Activated naive CD4-positive, alpha-beta T cell treated with anti-CD3 and anti-CD28 coated beads for 36 hours (primary cell): ENCODE measurements at regions of chr5 and their contacts with region 1.

Region 1: GRCh38 chr5:108748401-108749127 is 867 bp downstream of the FER start:
- DNase-seq: peak; percentile 98
- H3K4me3 Mint-ChIP-seq: peak overlapping the region; percentile 85
- H3K27ac Mint-ChIP-seq: peak overlapping the region; percentile 88
- H3K4me1 Mint-ChIP-seq: peaks cover 17% of the 10 kb centered on the region
- H3K27me3 Mint-ChIP-seq: no peaks in the 10 kb centered on the region

Region 2: DNA sequence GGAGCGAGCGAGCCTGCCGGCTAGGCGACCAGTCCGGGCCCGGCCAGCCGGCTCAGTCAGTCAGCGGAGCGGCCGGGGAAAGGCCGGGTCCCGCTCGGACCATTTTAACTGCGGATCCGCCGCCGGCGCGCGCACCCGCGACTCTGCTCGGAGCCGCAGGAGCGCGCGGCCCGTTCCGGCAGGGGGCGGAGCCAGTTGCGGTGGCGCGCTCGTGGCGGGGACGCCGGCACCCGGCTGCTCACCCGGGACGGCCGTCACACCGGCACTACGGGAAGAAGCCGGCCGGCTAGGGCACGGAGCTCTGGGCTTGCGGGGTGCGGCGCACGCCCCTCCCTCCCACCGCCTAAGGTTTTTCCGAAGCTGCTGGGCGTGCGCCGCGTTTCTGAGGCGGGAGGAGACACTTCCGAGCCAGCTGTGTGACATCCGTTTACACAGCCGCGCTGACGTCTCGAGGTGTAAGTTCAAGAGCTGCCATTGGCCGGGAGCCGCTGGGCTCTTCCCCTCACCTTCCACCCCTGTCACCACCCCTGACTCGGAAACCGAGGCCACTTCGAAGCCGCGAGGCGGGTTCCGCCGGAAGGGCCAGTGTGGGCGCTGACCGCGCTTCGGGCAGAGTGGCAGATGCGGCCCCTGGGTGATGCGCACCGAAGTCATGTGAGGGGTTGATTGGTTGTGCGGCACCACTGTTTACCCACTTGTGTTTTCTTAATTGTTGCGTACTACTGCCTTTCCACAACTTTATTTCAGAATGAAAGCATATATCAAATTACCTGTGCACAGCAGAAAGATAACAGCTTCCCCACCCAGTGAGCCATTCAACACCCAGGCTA is 366.4 kb before region 1 on chr5 and contains the start of gene FBXL17:
- CTCF ChIA-PET with region 1: no interaction called
- intact Hi-C with region 1: loop called (anchors 1 kb)
- DNase-seq: peak; percentile 95
- H3K4me3 Mint-ChIP-seq: peak within 1 kb of the TSS; percentile 82
- H3K27ac Mint-ChIP-seq: peak within 1 kb of the TSS; percentile 95
- H3K4me1 Mint-ChIP-seq: peaks cover 36% of the 10 kb centered on the region
- H3K27me3 Mint-ChIP-seq: no peaks in the 10 kb centered on the region
- total RNA-seq, gene FBXL17: 3.5 to 4.3 TPM

Region 3: DNA sequence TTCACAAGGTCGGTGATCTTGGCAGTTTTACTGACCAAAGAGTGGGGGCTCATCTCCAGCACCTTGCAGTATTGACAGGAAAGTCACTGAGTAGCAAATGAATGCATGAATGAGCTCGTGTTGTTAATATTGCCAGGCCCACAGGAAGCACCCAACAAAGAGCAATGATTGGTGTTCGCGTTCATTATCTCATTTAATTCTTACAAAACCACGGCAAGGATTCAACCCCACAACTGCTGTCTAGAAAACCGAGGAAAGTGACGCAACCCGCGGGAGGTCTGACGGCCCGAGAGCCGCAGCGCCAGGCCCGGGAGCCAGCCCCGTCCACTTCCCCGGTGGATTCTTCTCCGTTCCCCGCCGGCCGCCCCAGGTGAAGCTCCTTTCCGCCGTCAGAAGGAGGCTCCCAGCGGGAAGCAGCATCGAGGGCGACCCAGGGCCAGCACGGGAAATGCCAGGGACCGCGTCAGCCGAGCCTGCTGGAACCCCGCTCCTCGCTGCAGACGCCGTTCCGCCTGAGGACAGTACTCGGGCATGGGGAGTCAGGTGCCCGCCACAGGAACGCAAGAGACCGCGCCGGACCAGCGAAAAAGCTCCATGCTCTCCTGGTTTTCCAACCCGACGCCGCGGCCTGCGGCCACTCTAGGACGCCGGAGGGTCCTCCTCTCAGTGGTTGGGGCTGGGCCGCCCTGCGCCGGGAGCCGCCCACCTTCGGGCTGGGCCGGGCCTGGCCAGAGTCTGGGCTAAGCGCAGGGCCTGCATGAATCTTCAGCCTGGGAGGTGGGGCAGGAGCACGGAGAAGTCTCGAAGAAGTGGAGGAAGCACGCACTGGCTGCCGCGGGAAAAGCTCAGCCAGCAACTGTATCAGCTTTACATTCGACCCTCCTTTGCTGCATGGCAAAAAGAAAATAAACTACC is 20.7 kb before region 1 on chr5:
- CTCF ChIA-PET with region 1: interaction called, 4 read pairs
- intact Hi-C with region 1: loop called (anchors 1 kb)
- DNase-seq: peak; percentile 53
- H3K4me3 Mint-ChIP-seq: peak overlapping the region; percentile 61
- H3K27ac Mint-ChIP-seq: peak overlapping the region; percentile 6
- H3K4me1 Mint-ChIP-seq: peaks cover 21% of the 10 kb centered on the region
- H3K27me3 Mint-ChIP-seq: peaks cover 42% of the 10 kb centered on the region

Region 4: DNA sequence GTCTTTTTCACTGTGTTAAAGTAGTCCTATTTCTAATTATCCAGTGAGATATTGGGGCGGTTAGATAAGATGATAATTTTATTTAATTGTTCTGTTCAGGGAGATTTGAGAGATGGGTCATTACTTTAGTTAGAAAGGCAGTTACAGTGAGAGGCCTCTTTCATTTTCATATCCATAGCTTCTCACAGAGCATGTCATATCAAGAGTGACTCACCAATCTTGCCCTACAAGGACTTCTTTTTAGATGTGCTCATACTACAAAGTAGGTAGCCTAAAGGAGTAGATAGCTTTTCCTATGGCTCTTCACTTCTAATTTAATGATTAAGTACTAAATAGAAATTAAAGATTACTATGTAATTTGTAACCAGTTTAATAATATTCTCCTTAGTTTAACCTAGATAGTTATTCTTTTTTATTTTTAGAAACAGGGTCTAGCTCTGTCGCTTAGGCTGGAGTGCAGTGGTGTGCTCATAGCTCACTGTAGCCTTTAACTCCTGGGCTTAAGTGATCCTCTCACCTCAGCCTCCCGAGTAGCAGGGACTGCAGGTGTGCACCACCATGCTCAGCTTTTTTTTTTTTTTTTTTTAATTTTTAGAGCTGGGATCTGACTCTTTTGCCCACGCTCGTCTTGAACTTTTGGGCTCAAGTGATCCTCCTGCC is 70.2 kb after region 1 on chr5:
- CTCF ChIA-PET with region 1: no interaction called
- intact Hi-C with region 1: loop called (anchors 2 kb)
- DNase-seq: no peak
- H3K4me3 Mint-ChIP-seq: no peak overlapping the region
- H3K27ac Mint-ChIP-seq: no peak overlapping the region
- H3K4me1 Mint-ChIP-seq: peaks cover 3% of the 10 kb centered on the region
- H3K27me3 Mint-ChIP-seq: no peaks in the 10 kb centered on the region

Region 5: DNA sequence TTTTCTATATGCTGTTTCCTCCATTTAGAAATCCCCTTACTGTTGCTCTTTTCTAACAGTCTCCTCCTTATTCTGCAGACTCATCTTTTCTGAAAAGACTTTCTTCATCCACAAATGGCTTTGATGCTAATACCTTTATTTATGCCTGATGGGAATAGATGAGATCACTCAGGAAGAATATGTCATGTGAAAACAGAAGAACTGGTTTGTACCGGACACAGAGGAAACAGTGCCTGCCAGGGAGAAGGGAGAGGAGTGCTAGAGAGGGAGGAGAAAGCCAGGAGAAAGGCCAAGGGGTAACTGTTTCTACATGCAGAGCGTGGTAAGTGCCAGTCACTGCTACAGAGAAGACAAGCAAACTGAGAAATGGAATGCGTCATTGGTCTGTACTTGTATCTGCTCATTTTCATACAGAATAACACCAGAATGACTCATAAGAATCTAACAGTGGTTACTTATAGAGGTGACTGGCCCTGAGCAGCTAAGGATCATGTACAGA is 707.1 kb after region 1 on chr5:
- CTCF ChIA-PET with region 1: no interaction called
- intact Hi-C with region 1: loop called (anchors 2 kb)
- DNase-seq: peak; percentile 54
- H3K4me3 Mint-ChIP-seq: peak overlapping the region; percentile 23
- H3K27ac Mint-ChIP-seq: peak overlapping the region; percentile 88
- H3K4me1 Mint-ChIP-seq: peaks cover 10% of the 10 kb centered on the region
- H3K27me3 Mint-ChIP-seq: peaks cover 10% of the 10 kb centered on the region

Region 6: DNA sequence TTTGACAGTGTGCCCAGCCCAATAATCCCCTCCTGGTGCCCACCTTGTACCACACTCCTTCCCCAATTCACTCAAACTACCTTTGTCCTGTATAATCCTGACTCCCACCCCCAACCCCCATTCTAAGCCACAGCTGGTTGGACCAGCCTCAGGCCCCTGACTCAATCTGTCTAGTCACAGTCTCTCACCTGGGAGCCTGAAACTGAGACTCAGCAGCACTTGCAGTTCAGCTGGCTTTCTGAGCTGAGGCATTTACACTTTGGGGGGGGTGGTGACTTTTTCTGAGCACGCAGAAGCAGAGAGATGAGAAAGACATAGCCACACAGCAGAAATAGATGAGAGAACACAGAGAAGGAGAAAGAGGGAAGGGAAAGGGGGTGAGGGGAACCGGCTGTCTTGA is 1188.4 kb after region 1 on chr5:
- CTCF ChIA-PET with region 1: no interaction called
- intact Hi-C with region 1: loop called (anchors 10 kb)
- DNase-seq: peak; percentile 81
- H3K4me3 Mint-ChIP-seq: peak overlapping the region; percentile 17
- H3K27ac Mint-ChIP-seq: peak overlapping the region; percentile 80
- H3K4me1 Mint-ChIP-seq: peaks cover 29% of the 10 kb centered on the region
- H3K27me3 Mint-ChIP-seq: no peaks in the 10 kb centered on the region